B cell (primary cell): ENCODE measurements at regions of chr14 and their contacts with region 1.

Region 1: GRCh38 chr14:24710403-24711112 is 76.6 kb upstream of the GZMB start:
- DNase-seq: peak; percentile 74
- ATAC-seq: peak; percentile 37
- H3K4me3 ChIP-seq: no peak overlapping the region
- H3K4me3 Mint-ChIP-seq: no peak overlapping the region
- H3K27ac ChIP-seq: no peak overlapping the region
- H3K27ac Mint-ChIP-seq: no peak overlapping the region
- H3K4me1 ChIP-seq: peaks cover 11 to 25% of the 10 kb centered on the region in 2 donors
- H3K4me1 Mint-ChIP-seq: peaks cover 32% of the 10 kb centered on the region
- H3K27me3 ChIP-seq: peaks cover 0 to 11% (median 0%) of the 10 kb centered on the region in 4 experiments
- H3K27me3 Mint-ChIP-seq: no peaks in the 10 kb centered on the region
- CTCF ChIP-seq: peak; percentile 91

Region 2: GRCh38 chr14:24366721-24367513 is 343.6 kb before region 1 on chr14:
- CTCF ChIA-PET with region 1: no interaction called
- POLR2A ChIA-PET with region 1: no interaction called
- intact Hi-C with region 1: loop called (anchors 10 kb)
- DNase-seq: peak; percentile 94
- ATAC-seq: peak; percentile 85
- H3K4me3 ChIP-seq: peak overlapping the region in 4 of 5 experiments; percentile 52 to 64 (median 60)
- H3K4me3 Mint-ChIP-seq: peak overlapping the region; percentile 92
- H3K27ac ChIP-seq: peak overlapping the region; percentile 59 to 70
- H3K27ac Mint-ChIP-seq: peak overlapping the region; percentile 92
- H3K4me1 ChIP-seq: peaks cover 30 to 39% of the 10 kb centered on the region in 2 donors
- H3K4me1 Mint-ChIP-seq: peaks cover 32% of the 10 kb centered on the region
- H3K27me3 ChIP-seq: peaks cover 0 to 32% (median 6%) of the 10 kb centered on the region in 4 experiments
- H3K27me3 Mint-ChIP-seq: peaks cover 10% of the 10 kb centered on the region
- CTCF ChIP-seq: no peak

Region 3: GRCh38 chr14:24673534-24674203 is 36.9 kb before region 1 on chr14:
- CTCF ChIA-PET with region 1: interaction called, 54 read pairs
- POLR2A ChIA-PET with region 1: no interaction called
- intact Hi-C with region 1: loop called (anchors 2 kb)
- DNase-seq: no peak
- ATAC-seq: peak; percentile 59
- H3K4me3 ChIP-seq: peak overlapping the region in 4 of 5 experiments; percentile 21 to 66 (median 26)
- H3K4me3 Mint-ChIP-seq: peak overlapping the region; percentile 90
- H3K27ac ChIP-seq: peak overlapping the region; percentile 77 to 89
- H3K27ac Mint-ChIP-seq: peak overlapping the region; percentile 99
- H3K4me1 ChIP-seq: peaks cover 44 to 50% of the 10 kb centered on the region in 2 donors
- H3K4me1 Mint-ChIP-seq: peaks cover 63% of the 10 kb centered on the region
- H3K27me3 ChIP-seq: no peaks in the 10 kb centered on the region
- H3K27me3 Mint-ChIP-seq: no peaks in the 10 kb centered on the region
- CTCF ChIP-seq: no peak

Region 4: DNA sequence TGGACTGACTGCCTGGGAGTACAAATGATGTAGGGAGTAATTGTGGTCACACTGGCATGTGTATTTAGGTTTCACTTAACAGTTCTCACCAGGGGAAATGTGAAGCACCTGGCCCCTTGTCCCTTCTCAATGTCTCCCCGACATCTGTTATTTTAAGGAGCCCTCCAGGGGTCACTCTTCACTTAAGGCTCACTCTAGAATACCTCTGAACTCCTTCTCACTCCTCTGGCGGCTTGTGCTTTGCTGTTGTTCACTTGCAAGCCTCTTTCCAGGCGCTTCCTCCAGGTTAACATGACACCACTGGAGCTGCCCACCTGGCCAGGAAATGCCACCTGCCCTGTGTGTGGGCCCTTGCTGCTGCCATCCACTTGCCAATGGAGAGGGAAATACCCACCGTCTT is 20.1 kb before region 1 on chr14:
- CTCF ChIA-PET with region 1: interaction called, 59 read pairs
- POLR2A ChIA-PET with region 1: no interaction called
- intact Hi-C with region 1: no loop called
- DNase-seq: peak; percentile 39
- ATAC-seq: peak; percentile 39
- H3K4me3 ChIP-seq: no peak overlapping the region
- H3K4me3 Mint-ChIP-seq: no peak overlapping the region
- H3K27ac ChIP-seq: no peak overlapping the region
- H3K27ac Mint-ChIP-seq: no peak overlapping the region
- H3K4me1 ChIP-seq: peaks cover 10% of the 10 kb centered on the region in 2 donors
- H3K4me1 Mint-ChIP-seq: peaks cover 5% of the 10 kb centered on the region
- H3K27me3 ChIP-seq: no peaks in the 10 kb centered on the region
- H3K27me3 Mint-ChIP-seq: peaks cover 8% of the 10 kb centered on the region
- CTCF ChIP-seq: peak; percentile 22

Region 5: DNA sequence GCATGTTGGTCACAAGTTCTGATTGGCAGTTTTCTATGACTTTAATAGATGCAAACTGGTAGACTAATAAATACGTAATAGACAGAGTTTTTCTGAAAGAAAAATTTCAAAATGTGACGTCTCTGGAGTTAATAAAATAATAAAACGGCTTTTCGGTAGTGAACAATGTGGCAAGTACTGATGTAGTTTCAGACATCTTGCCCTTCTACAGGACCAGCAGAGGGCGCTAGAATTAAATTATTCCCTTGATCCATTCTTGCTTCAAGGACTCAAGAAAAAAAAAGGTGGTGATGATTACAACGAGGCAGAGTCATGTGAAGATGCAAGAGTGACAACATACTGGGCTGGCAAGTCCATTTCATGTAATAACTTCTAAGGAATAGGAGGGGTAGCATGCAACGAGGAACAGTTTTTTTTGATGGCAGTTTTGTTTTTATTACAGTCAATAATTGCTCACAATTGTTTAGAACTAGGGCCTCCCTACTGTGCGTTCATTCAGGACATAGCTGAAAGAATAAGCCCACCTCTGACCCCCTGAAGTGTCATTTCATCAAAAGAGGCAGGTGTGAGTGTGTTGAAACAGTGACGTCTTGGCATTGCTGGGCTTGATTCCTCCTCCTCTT is 24.4 kb after region 1 on chr14:
- CTCF ChIA-PET with region 1: interaction called, 11 read pairs
- POLR2A ChIA-PET with region 1: no interaction called
- intact Hi-C with region 1: no loop called
- DNase-seq: peak; percentile 54
- ATAC-seq: no peak
- H3K4me3 ChIP-seq: no peak overlapping the region
- H3K4me3 Mint-ChIP-seq: no peak overlapping the region
- H3K27ac ChIP-seq: no peak overlapping the region
- H3K27ac Mint-ChIP-seq: no peak overlapping the region
- H3K4me1 ChIP-seq: no peaks in the 10 kb centered on the region
- H3K4me1 Mint-ChIP-seq: no peaks in the 10 kb centered on the region
- H3K27me3 ChIP-seq: no peaks in the 10 kb centered on the region
- H3K27me3 Mint-ChIP-seq: peaks cover 15% of the 10 kb centered on the region
- CTCF ChIP-seq: peak; percentile 81

Region 6: GRCh38 chr14:24828486-24828885 is 117.9 kb after region 1 on chr14:
- CTCF ChIA-PET with region 1: no interaction called
- POLR2A ChIA-PET with region 1: no interaction called
- intact Hi-C with region 1: no loop called
- DNase-seq: no peak
- ATAC-seq: no peak
- H3K4me3 ChIP-seq: no peak overlapping the region
- H3K4me3 Mint-ChIP-seq: no peak overlapping the region
- H3K27ac ChIP-seq: no peak overlapping the region
- H3K27ac Mint-ChIP-seq: no peak overlapping the region
- H3K4me1 ChIP-seq: no peaks in the 10 kb centered on the region
- H3K4me1 Mint-ChIP-seq: no peaks in the 10 kb centered on the region
- H3K27me3 ChIP-seq: peaks cover 0 to 4% (median 0%) of the 10 kb centered on the region in 4 experiments
- H3K27me3 Mint-ChIP-seq: peaks cover 5% of the 10 kb centered on the region
- CTCF ChIP-seq: no peak

Region 7: GRCh38 chr14:25150934-25151790 is 440.6 kb after region 1 on chr14:
- CTCF ChIA-PET with region 1: interaction called, 11 read pairs
- POLR2A ChIA-PET with region 1: no interaction called
- intact Hi-C with region 1: loop called (anchors 1 kb)
- DNase-seq: peak; percentile 35
- ATAC-seq: no peak
- H3K4me3 ChIP-seq: no peak overlapping the region
- H3K4me3 Mint-ChIP-seq: no peak overlapping the region
- H3K27ac ChIP-seq: no peak overlapping the region
- H3K27ac Mint-ChIP-seq: no peak overlapping the region
- H3K4me1 ChIP-seq: no peaks in the 10 kb centered on the region
- H3K4me1 Mint-ChIP-seq: no peaks in the 10 kb centered on the region
- H3K27me3 ChIP-seq: peaks cover 0 to 2% (median 0%) of the 10 kb centered on the region in 4 experiments
- H3K27me3 Mint-ChIP-seq: peaks cover 5% of the 10 kb centered on the region
- CTCF ChIP-seq: peak; percentile 98